ENCODE measurements at regions of chr2 and their contacts with region 1.

Region 1: DNA sequence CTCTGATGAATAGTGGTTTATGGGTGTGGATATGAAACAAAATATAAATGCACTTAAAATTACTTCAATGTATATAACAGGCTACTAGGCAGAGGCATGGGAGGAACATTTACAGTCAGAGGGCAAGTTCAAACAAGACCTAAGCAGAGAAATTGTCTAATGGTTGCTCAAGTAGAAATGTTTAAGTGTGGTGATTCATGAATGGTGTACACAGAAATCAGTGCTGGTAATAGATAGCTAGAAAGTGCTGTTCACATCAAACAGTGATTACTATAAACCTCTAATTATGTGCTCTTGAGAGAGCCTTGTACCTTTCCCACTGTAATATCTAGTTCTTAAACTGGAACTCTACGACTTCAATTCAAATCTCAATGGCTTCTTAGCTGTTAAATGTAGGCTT is 485.1 kb downstream of the NRXN1 start:
- DNase-seq: peak; percentile 86
- H3K4me3 ChIP-seq: no peak overlapping the region
- H3K27ac ChIP-seq: peak overlapping the region; percentile 59
- H3K4me1 ChIP-seq: peaks cover 18% of the 10 kb centered on the region
- H3K27me3 ChIP-seq: no peaks in the 10 kb centered on the region
- CTCF ChIP-seq: no peak

Region 2: DNA sequence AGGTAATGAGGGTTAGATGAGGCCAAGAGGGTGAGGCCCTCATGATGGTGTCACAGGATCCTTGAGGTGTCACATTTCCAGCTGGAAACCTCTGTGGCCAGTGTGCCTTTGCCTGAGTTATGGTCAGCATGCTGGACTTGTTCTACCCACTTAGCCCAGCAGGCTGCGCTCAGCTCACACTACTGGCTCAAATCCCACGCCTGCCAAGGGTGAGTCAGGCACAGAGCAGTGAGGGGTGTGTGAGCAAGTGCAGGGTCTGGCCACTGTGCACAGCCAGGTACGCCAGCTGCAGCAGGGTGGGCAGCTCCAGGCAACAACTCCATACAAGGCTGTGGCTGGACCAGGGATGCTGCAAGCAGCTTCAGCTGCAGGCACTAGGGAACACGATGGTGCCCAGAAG is 775.9 kb before region 1 on chr2:
- CTCF ChIA-PET with region 1: no interaction called
- dilution Hi-C with region 1: no loop called
- in situ Hi-C with region 1: no loop called
- intact Hi-C with region 1: no loop called
- DNase-seq: peak; percentile 31
- H3K4me3 ChIP-seq: no peak overlapping the region
- H3K27ac ChIP-seq: no peak overlapping the region
- H3K4me1 ChIP-seq: no peaks in the 10 kb centered on the region
- H3K27me3 ChIP-seq: no peaks in the 10 kb centered on the region
- CTCF ChIP-seq: peak; percentile 47 to 65

Region 3: DNA sequence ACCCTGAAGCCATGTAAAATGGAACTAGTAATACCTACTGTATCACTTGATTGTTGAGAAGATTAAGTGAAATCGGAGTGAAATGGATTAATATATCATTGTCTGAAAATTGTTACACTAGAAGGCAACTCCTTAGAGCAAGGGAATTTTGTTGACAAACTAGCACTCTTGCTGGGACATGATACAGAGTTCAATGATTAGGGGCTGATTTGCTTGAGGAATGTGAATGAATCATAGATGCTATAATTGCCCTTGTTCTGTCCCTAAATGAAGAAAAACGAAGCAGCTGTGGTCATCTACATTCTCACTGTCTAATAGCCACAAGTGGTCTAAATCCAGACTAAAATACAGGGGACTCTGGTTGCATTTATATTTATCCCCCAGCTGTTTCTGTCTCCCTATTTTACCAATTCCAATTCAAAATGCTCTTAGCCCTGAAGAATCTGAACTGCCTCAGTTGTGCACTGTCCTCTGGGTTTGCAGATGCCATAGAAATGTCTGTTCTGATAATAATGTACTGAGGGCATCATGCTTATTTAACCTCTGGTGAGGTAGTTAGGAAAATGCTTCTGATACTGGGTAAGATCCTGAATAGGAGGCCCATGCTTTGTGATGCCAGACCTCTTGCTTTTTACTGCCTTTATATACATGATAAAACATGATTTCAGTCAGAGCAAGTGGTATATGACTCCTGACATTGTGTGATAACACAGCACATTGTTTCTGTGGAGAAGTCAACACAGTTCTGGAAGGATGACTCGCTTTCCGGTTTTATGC is 103.0 kb after region 1 on chr2:
- CTCF ChIA-PET with region 1: no interaction called
- dilution Hi-C with region 1: no loop called
- in situ Hi-C with region 1: no loop called
- intact Hi-C with region 1: loop called (anchors 5 kb)
- DNase-seq: peak; percentile 82
- H3K4me3 ChIP-seq: no peak overlapping the region
- H3K27ac ChIP-seq: peak overlapping the region; percentile 81
- H3K4me1 ChIP-seq: peaks cover 29% of the 10 kb centered on the region
- H3K27me3 ChIP-seq: no peaks in the 10 kb centered on the region
- CTCF ChIP-seq: no peak